Heart left ventricle (tissue), 16 donors: ENCODE measurements at regions of chr4 and their contacts with region 1.

Region 1: GRCh38 chr4:189436207-189436606 is 504.5 kb upstream of the FRG1 start:
- DNase-seq: no peak
- ATAC-seq: no peak
- H3K4me3 ChIP-seq: no peak overlapping the region
- H3K27ac ChIP-seq: no peak overlapping the region
- H3K4me1 ChIP-seq: no peaks in the 10 kb centered on the region
- H3K27me3 ChIP-seq: no peaks in the 10 kb centered on the region
- CTCF ChIP-seq: peak in 4 of 12 donors; percentile 8 to 25 (median 16)
- POLR2A ChIP-seq: no peak

Region 2: GRCh38 chr4:189396435-189396834 is 39.8 kb before region 1 on chr4:
- intact Hi-C with region 1: no loop called
- DNase-seq: no peak
- ATAC-seq: no peak
- H3K4me3 ChIP-seq: no peak overlapping the region
- H3K27ac ChIP-seq: no peak overlapping the region
- H3K4me1 ChIP-seq: no peaks in the 10 kb centered on the region
- H3K27me3 ChIP-seq: no peaks in the 10 kb centered on the region
- CTCF ChIP-seq: no peak
- POLR2A ChIP-seq: no peak

Region 3: DNA sequence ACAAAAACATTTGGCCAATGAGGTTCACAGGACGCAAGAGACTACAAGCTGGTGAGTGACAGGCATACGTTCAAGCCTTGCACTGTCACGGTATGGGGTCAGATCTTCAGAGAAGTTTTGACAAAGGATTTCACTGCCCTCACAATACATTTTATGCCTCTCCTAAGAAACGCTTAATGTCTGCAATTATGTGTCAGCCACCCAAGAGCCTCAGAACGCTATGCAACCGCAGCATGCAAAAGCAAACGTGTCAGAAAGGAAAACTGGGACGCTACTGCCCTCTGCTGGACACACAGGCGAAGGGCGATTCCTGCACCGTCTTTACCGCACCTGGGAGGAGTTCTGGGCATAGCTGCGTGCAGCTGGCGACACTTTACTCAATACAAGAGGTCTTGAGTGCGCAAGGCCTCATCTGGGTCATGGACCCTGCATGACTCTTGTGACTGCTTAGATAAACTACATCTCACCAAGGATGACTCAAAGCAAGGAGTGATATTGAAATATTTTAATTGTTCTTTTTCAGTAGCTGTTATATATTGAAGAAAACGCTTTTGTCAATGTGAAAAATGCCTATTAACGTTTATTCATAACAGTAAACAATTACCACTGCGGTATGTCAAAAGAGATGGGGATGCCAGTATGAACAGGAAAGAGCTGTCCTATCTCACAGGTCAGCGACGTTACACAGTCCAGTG is 356.9 kb after region 1 on chr4:
- intact Hi-C with region 1: loop called in 8 of 10 experiments (anchors 2 to 10 kb)
- DNase-seq: peak; percentile 40 to 75 (median 71)
- ATAC-seq: peak; percentile 77 to 98 (median 90)
- H3K4me3 ChIP-seq: peak overlapping the region in 7 of 12 donors; percentile 14 to 27 (median 22)
- H3K27ac ChIP-seq: no peak overlapping the region
- H3K4me1 ChIP-seq: peaks cover 0 to 8% (median 0%) of the 10 kb centered on the region in 12 donors
- H3K27me3 ChIP-seq: no peaks in the 10 kb centered on the region
- CTCF ChIP-seq: peak; percentile 86 to 98 (median 90)
- POLR2A ChIP-seq: no peak

Region 4: GRCh38 chr4:189912170-189912569 is 476.0 kb after region 1 on chr4:
- intact Hi-C with region 1: loop called in 1 of 10 experiments (anchors 10 kb)
- DNase-seq: no peak
- ATAC-seq: no peak
- H3K4me3 ChIP-seq: no peak overlapping the region
- H3K27ac ChIP-seq: no peak overlapping the region
- H3K4me1 ChIP-seq: no peaks in the 10 kb centered on the region
- H3K27me3 ChIP-seq: no peaks in the 10 kb centered on the region
- CTCF ChIP-seq: peak in 7 of 12 donors; percentile 11 to 38 (median 34)
- POLR2A ChIP-seq: no peak